ENCODE measurements at regions of chr9 and their contacts with region 1.

Region 1: DNA sequence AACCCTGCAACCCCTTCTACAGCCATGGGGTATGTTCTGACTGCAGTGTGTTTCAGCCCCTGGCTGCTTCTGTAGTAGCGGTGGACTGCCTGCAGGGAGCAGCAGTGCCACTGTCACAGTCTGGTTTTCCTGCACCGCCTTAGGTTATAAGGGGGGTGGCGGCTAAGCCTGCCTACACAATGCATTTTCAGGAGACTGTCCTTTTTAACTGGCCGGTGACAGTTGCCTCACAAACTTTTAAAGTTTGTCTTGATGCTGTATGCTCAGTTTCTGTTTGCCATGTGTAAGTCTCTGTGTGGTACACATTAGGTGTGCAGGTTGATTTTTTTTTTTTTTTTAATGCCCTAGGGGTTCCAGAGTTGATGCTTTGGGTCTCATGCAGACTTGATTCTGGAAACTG is 53.0 kb downstream of the NUP214 start:
- DNase-seq: peak; percentile 16 to 81 (median 54)
- ATAC-seq: peak; percentile 98
- H3K4me3 ChIP-seq: no peak overlapping the region
- H3K27ac ChIP-seq: no peak overlapping the region
- H3K4me1 ChIP-seq: peaks cover 0 to 4% of the 10 kb centered on the region in 2 donors
- H3K27me3 ChIP-seq: no peaks in the 10 kb centered on the region
- CTCF ChIP-seq: peak; percentile 94 to 95

Region 2: DNA sequence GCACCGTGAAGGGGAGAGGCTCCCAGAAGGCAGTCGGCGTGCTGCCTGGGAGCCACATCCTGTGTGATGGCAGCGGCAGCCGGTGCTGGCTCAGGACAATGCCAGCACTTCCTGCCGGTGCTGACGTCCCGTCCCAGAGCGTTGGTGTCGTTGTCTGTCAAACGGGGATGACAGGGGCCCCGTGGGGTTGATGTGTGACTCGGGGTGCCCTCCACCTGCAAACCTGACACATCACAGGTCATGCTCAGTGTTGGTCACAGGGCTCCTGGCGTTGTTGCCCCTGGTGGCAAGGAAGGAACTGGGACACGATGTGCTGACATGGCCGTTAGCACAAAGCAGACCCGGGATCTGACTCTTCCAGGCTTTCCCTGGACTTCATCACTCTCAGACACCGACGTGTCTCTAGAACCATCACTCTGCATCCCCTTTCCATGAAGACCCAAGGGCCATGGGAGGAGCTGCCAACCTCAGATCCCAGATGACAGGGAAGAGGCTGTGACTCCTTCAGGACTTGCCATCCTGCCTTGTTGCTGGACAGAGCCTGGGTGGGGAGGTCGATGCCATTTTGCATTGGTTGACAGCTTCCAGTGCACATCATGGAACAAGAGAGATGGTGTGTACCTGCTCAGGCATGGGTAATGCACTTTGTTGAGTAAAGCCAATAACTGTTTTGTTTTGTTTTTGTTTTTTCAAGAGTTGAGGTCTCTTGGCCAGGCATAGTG is 132.6 kb after region 1 on chr9:
- intact Hi-C with region 1: loop called in 1 of 2 experiments (anchors 10 kb)
- DNase-seq: no peak
- ATAC-seq: no peak
- H3K4me3 ChIP-seq: no peak overlapping the region
- H3K27ac ChIP-seq: no peak overlapping the region
- H3K4me1 ChIP-seq: no peaks in the 10 kb centered on the region
- H3K27me3 ChIP-seq: no peaks in the 10 kb centered on the region
- CTCF ChIP-seq: no peak

Region 3: GRCh38 chr9:131334629-131335367 is 156.4 kb after region 1 on chr9:
- intact Hi-C with region 1: loop called in 1 of 2 experiments (anchors 5 kb)
- DNase-seq: peak in 1 of 4 donors; percentile 41
- ATAC-seq: peak; percentile 16
- H3K4me3 ChIP-seq: no peak overlapping the region
- H3K27ac ChIP-seq: no peak overlapping the region
- H3K4me1 ChIP-seq: no peaks in the 10 kb centered on the region
- H3K27me3 ChIP-seq: no peaks in the 10 kb centered on the region
- CTCF ChIP-seq: no peak